T-cell (primary cell): ENCODE measurements at regions of chr5 and their contacts with region 1.

Region 1: DNA sequence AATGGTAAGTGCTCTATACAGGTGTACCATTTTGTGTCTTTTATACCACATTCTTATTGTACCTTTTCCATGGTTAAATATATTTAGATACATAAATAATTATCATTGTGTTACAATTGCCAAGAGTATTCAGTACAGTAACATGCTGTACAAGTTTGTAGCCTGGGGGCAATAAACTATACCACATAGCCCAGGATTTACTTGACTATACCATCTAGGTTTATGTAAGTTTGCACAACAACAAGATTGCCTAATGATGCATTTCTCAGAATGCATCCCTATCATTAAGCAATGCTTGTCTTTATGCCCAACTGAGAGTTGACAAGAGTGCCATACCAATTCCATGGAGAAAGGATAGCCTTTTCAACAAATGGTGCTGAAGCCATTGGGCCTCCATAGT is 136.7 kb upstream of the PJA2 start:
- DNase-seq: no peak
- ATAC-seq: no peak
- H3K4me3 ChIP-seq: no peak overlapping the region
- H3K4me3 Mint-ChIP-seq: no peak overlapping the region
- H3K27ac ChIP-seq: no peak overlapping the region
- H3K27ac Mint-ChIP-seq: no peak overlapping the region
- H3K4me1 ChIP-seq: no peaks in the 10 kb centered on the region
- H3K4me1 Mint-ChIP-seq: no peaks in the 10 kb centered on the region
- H3K27me3 ChIP-seq: no peaks in the 10 kb centered on the region
- H3K27me3 Mint-ChIP-seq: peaks cover 0 to 10% of the 10 kb centered on the region in 2 donors

Region 2: GRCh38 chr5:110561510-110561909 is 1015.0 kb after region 1 on chr5:
- CTCF ChIA-PET with region 1: interaction called in 1 of 2 experiments, 12 read pairs
- POLR2A ChIA-PET with region 1: no interaction called
- DNase-seq: no peak
- ATAC-seq: no peak
- H3K4me3 ChIP-seq: no peak overlapping the region
- H3K4me3 Mint-ChIP-seq: no peak overlapping the region
- H3K27ac ChIP-seq: no peak overlapping the region
- H3K27ac Mint-ChIP-seq: no peak overlapping the region
- H3K4me1 ChIP-seq: no peaks in the 10 kb centered on the region
- H3K4me1 Mint-ChIP-seq: no peaks in the 10 kb centered on the region
- H3K27me3 ChIP-seq: no peaks in the 10 kb centered on the region
- H3K27me3 Mint-ChIP-seq: peaks cover 0 to 5% of the 10 kb centered on the region in 2 donors